Testis (tissue), 5 donors: ENCODE measurements at regions of chr9 and their contacts with region 1.

Region 1: GRCh38 chr9:97632985-97633858 is at the starts of genes NCBP1 and TSTD2:
- DNase-seq: peak; percentile 98
- H3K4me3 ChIP-seq: peak within 1 kb of the TSS; percentile 98 to 99
- H3K27ac ChIP-seq: peak within 1 kb of the TSS; percentile 97 to 99
- H3K4me1 ChIP-seq: peaks cover 42% of the 10 kb centered on the region
- H3K27me3 ChIP-seq: no peaks in the 10 kb centered on the region
- CTCF ChIP-seq: peak in 1 of 3 experiments; percentile 38
- POLR2A ChIP-seq: no peak
- total RNA-seq, gene NCBP1: 36.9 to 41.7 TPM
- total RNA-seq, gene TSTD2: 31.8 to 35.6 TPM

Region 2: DNA sequence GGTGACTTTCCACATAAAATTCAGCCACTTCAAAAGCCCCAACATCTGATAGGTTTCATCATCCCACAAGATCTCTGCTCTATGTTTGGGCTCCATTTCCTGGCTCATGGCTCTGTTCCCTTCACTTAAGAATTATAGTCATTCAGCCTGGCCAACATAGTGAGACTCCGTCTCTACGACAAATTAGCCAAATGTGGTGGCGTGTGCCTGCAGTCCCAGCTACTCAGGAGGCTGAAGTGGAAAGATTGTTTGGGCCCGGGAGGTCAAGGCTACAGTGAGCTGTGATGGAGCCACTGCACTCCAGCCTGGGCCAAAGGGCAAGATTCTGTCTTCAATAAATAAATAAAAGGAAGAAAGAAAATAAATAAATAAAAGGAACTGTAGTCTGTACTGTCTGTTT is 536.4 kb before region 1 on chr9:
- intact Hi-C with region 1: no loop called
- DNase-seq: no peak
- H3K4me3 ChIP-seq: no peak overlapping the region
- H3K27ac ChIP-seq: no peak overlapping the region
- H3K4me1 ChIP-seq: no peaks in the 10 kb centered on the region
- H3K27me3 ChIP-seq: no peaks in the 10 kb centered on the region
- CTCF ChIP-seq: no peak
- POLR2A ChIP-seq: no peak

Region 3: GRCh38 chr9:97543565-97543964 is 89.7 kb before region 1 on chr9:
- intact Hi-C with region 1: no loop called
- DNase-seq: no peak
- H3K4me3 ChIP-seq: no peak overlapping the region
- H3K27ac ChIP-seq: no peak overlapping the region
- H3K4me1 ChIP-seq: no peaks in the 10 kb centered on the region
- H3K27me3 ChIP-seq: no peaks in the 10 kb centered on the region
- CTCF ChIP-seq: no peak
- POLR2A ChIP-seq: no peak

Region 4: DNA sequence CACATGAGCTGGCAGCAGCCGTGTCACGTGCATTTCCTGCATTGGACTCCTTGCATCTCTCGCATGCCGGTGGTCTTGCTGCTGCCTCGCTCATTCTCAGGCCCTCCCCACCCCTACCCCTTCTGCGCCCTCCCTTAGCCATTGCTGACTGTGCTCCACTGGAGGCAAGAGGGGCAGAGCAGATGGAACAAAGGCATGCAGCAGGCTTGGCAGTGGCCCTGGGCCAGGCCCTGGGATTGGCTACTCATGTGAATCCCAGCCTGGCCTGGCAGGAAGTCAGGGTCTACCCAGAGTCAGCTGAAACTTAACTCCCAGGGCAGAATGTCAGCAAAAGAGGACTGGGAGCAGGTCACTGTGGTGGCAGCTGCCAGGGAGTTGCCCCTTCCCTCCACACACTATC is 62.3 kb before region 1 on chr9:
- intact Hi-C with region 1: loop called (anchors 10 kb)
- DNase-seq: no peak
- H3K4me3 ChIP-seq: no peak overlapping the region
- H3K27ac ChIP-seq: no peak overlapping the region
- H3K4me1 ChIP-seq: no peaks in the 10 kb centered on the region
- H3K27me3 ChIP-seq: no peaks in the 10 kb centered on the region
- CTCF ChIP-seq: no peak
- POLR2A ChIP-seq: no peak

Region 5: GRCh38 chr9:97696803-97697601 is 63.8 kb after region 1 on chr9 and contains the start of gene XPA:
- intact Hi-C with region 1: loop called (anchors 10 kb)
- DNase-seq: peak; percentile 96
- H3K4me3 ChIP-seq: peak within 1 kb of the TSS; percentile 69 to 81
- H3K27ac ChIP-seq: peak within 1 kb of the TSS; percentile 86 to 93
- H3K4me1 ChIP-seq: peaks cover 13% of the 10 kb centered on the region
- H3K27me3 ChIP-seq: no peaks in the 10 kb centered on the region
- CTCF ChIP-seq: no peak
- POLR2A ChIP-seq: peak; percentile 49
- total RNA-seq, gene XPA: 10.6 TPM